ENCODE measurements at regions of chr1 and their contacts with region 1.

Region 1: DNA sequence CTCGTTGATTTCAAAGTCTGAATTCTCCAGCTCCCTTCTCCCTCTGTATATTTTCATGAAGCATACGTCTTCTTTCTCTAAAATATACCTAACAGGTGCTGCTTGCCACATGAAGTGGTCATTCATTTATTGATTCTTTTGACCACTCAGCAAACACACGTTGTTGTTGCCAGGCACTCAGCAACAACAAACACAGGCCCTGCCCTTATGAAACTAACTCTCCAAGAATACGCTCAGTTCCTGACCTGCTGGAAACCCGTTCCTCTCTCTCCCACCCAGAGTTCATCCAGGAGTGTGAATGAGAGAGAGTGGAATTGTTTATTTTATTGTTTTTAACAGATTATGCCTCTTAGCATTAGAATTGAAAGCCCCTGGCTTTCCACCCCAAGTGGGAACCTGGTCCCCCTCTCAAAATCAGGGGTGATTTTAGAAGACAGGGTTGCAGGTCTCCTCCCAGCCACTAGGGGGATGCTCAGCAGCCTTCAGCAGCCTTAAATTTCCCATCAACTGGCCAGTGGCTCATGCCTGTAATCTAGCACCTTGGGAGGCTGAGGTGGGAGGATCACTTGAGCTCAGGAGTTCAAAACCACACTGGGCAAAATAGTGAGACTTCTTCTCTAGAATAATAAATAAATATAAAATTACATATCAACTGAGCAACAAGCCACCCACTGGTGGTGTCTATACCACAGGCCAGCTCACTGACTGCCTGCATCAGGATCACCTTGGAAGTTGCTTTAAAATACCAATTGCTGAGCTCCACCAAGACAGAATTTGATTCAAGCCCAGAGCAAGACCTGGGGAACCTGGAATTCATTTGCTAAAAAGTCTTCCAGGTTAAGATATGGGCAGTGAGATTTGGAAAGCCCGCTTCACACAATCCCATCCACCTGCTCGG is 181.0 kb upstream of the KLHDC7A start:
- DNase-seq: peak in 3 of 7 donors; percentile 27 to 40 (median 32)
- H3K4me3 ChIP-seq: no peak overlapping the region
- H3K27ac ChIP-seq: no peak overlapping the region
- H3K4me1 ChIP-seq: no peaks in the 10 kb centered on the region
- H3K27me3 ChIP-seq: no peaks in the 10 kb centered on the region
- CTCF ChIP-seq: peak; percentile 42 to 72 (median 54)
- POLR2A ChIP-seq: no peak

Region 2: DNA sequence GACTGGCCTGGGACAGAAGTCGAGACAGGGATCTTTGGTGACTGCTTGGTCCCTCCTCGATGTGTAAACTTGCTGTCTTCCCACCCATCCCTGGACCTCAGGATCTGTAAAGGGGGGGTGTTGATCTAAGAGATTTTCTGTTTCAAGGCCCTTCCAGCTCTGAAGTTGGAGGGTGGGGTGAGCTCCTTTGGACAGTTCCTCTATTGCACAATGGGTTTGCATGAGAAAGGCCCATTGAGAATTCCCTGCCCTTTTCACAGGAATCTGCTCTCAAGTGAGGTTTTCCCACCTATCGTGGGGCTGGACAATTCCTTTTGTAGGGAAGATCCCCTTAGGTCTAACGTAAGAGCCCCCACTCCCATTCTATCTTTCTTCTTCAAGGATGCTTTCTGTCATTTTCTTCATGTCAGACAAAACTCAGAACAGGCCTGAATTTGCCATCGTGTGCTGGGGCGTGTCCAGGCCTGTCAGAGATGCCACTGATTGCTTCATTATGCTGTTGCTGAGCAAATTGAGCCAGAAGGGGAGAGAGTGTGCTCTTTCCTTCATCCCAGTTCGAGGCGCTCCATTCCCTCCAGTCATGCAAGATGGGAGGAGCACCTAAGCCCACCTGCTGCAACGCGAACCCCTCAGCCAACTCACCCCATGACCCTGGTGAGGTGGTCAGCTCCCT is 342.0 kb before region 1 on chr1:
- intact Hi-C with region 1: no loop called
- DNase-seq: no peak
- H3K4me3 ChIP-seq: no peak overlapping the region
- H3K27ac ChIP-seq: no peak overlapping the region
- H3K4me1 ChIP-seq: no peaks in the 10 kb centered on the region
- H3K27me3 ChIP-seq: peaks cover 1% of the 10 kb centered on the region
- CTCF ChIP-seq: no peak
- POLR2A ChIP-seq: no peak

Region 3: GRCh38 chr1:18581420-18581880 is 281.8 kb after region 1 on chr1:
- intact Hi-C with region 1: loop called in 1 of 2 experiments (anchors 5 kb)
- DNase-seq: peak in 6 of 7 donors; percentile 25 to 61 (median 32)
- H3K4me3 ChIP-seq: no peak overlapping the region
- H3K27ac ChIP-seq: no peak overlapping the region
- H3K4me1 ChIP-seq: no peaks in the 10 kb centered on the region
- H3K27me3 ChIP-seq: no peaks in the 10 kb centered on the region
- CTCF ChIP-seq: peak; percentile 49 to 70 (median 66)
- POLR2A ChIP-seq: no peak

Region 4: DNA sequence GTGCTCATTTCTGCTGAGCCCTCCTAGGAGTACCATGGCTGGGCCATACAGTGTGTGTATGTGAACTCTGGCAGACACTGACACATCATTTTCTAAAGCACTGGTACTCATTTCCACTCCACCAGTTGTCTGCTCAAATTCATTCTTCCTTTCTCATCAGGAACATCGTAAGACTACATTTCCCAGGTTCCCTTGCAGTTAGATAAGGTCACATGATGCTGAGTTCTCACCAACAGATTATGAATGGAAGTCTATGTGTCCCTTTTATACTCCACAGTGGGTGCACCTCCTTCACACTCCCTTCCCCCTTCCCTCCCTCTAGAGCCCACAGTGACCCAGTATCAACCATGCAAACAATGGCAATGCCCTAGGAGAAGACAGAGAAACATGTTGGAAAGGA is 292.7 kb after region 1 on chr1:
- intact Hi-C with region 1: no loop called
- DNase-seq: no peak
- H3K4me3 ChIP-seq: no peak overlapping the region
- H3K27ac ChIP-seq: no peak overlapping the region
- H3K4me1 ChIP-seq: no peaks in the 10 kb centered on the region
- H3K27me3 ChIP-seq: no peaks in the 10 kb centered on the region
- CTCF ChIP-seq: no peak
- POLR2A ChIP-seq: no peak